ENCODE measurements at regions of chr22 and their contacts with region 1.

Region 1: DNA sequence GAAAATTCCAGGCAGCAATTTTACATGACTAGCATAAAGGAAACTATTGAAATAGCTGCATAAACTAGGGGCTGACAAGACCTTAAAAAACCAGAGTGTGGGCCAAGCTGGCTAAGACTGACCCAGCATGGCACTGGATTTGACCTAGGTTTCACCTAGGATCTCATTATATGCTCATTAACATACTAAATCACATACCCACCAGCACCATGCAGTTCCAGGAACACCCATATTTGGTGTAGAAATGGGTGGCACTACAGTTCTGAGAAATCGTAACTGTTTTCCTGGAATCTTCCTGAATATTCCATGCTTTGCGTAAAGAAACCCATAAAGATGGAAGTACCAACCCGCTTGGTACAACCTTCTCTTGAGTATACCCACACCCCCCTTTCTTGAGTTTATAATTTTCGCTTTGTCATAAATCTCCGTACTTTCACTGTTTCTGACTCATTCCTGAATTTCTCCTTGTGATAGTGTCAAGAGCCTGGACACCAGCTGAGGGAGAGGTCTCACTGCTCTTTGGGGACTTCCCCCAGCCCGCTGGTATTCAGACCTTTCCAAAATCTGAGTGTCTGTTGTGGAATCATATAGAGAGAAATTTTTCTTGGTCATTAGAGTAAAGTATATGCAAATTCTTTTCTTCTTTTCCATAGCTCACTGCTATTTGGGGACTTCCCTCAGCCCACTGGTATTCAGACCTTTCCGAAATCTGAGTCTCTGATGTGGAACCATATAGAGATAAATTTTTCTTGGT is 55.1 kb downstream of the MTMR3 start:
- DNase-seq: peak; percentile 30
- ATAC-seq: peak; percentile 83
- H3K4me3 Mint-ChIP-seq: no peak overlapping the region
- H3K27ac Mint-ChIP-seq: no peak overlapping the region
- H3K4me1 Mint-ChIP-seq: peaks cover 38% of the 10 kb centered on the region
- H3K27me3 Mint-ChIP-seq: no peaks in the 10 kb centered on the region

Region 2: GRCh38 chr22:29480512-29481264 is 457.4 kb before region 1 on chr22:
- CTCF ChIA-PET with region 1: no interaction called
- POLR2A ChIA-PET with region 1: no interaction called
- intact Hi-C with region 1: no loop called
- DNase-seq: peak; percentile 57
- ATAC-seq: peak; percentile 61
- H3K4me3 Mint-ChIP-seq: peak overlapping the region; percentile 38
- H3K27ac Mint-ChIP-seq: no peak overlapping the region
- H3K4me1 Mint-ChIP-seq: peaks cover 8% of the 10 kb centered on the region
- H3K27me3 Mint-ChIP-seq: peaks cover 43% of the 10 kb centered on the region

Region 3: GRCh38 chr22:29994027-29994715 is 56.1 kb after region 1 on chr22:
- CTCF ChIA-PET with region 1: no interaction called
- POLR2A ChIA-PET with region 1: no interaction called
- intact Hi-C with region 1: loop called in 1 of 2 experiments (anchors 10 kb)
- DNase-seq: no peak
- ATAC-seq: peak; percentile 90
- H3K4me3 Mint-ChIP-seq: no peak overlapping the region
- H3K27ac Mint-ChIP-seq: peak overlapping the region; percentile 28
- H3K4me1 Mint-ChIP-seq: peaks cover 14% of the 10 kb centered on the region
- H3K27me3 Mint-ChIP-seq: no peaks in the 10 kb centered on the region

Measured in activated CD4-positive, alpha-beta T cell treated with anti-CD3 and anti-CD28 coated beads for 36 hours (primary cell).